T-cell (primary cell): ENCODE measurements at regions of chr6 and their contacts with region 1.

Region 1: DNA sequence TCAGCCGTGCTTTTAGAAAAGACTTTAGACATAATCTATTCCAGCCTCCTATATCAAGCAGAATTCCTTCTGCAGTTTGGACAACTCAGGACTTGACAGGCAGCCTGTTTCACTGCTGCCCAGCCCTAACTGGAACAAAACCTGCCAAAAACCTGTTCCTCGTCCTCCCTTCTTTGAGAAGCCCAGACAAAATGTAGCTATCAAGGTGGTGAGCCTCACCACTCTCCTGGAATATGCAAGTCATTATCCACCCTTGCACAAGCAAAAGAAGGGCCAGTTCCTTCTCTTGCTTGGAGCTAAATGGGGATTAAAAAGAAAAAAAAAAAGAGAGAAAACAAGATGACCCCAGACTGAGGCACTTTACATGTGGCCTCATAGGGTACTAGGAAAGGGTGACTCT is 64.2 kb downstream of the TFAP2A start:
- DNase-seq: no peak
- ATAC-seq: no peak
- H3K4me3 ChIP-seq: no peak overlapping the region
- H3K4me3 Mint-ChIP-seq: no peak overlapping the region
- H3K27ac ChIP-seq: no peak overlapping the region
- H3K27ac Mint-ChIP-seq: no peak overlapping the region
- H3K4me1 ChIP-seq: no peaks in the 10 kb centered on the region
- H3K4me1 Mint-ChIP-seq: no peaks in the 10 kb centered on the region
- H3K27me3 ChIP-seq: peaks cover 0 to 16% of the 10 kb centered on the region in 2 experiments
- H3K27me3 Mint-ChIP-seq: peaks cover 10 to 14% of the 10 kb centered on the region in 2 donors

Region 2: GRCh38 chr6:10269814-10270472 is 80.8 kb before region 1 on chr6:
- CTCF ChIA-PET with region 1: no interaction called
- POLR2A ChIA-PET with region 1: no interaction called
- DNase-seq: no peak
- ATAC-seq: no peak
- H3K4me3 ChIP-seq: no peak overlapping the region
- H3K4me3 Mint-ChIP-seq: no peak overlapping the region
- H3K27ac ChIP-seq: no peak overlapping the region
- H3K27ac Mint-ChIP-seq: no peak overlapping the region
- H3K4me1 ChIP-seq: no peaks in the 10 kb centered on the region
- H3K4me1 Mint-ChIP-seq: no peaks in the 10 kb centered on the region
- H3K27me3 ChIP-seq: peaks cover 7 to 9% of the 10 kb centered on the region in 2 experiments
- H3K27me3 Mint-ChIP-seq: peaks cover 13 to 20% of the 10 kb centered on the region in 2 donors

Region 3: GRCh38 chr6:10381133-10381829 is 30.6 kb after region 1 on chr6:
- CTCF ChIA-PET with region 1: interaction called in 1 of 2 experiments, 12 read pairs
- POLR2A ChIA-PET with region 1: no interaction called
- DNase-seq: no peak
- ATAC-seq: no peak
- H3K4me3 ChIP-seq: no peak overlapping the region
- H3K4me3 Mint-ChIP-seq: no peak overlapping the region
- H3K27ac ChIP-seq: no peak overlapping the region
- H3K27ac Mint-ChIP-seq: no peak overlapping the region
- H3K4me1 ChIP-seq: peaks cover 0 to 19% of the 10 kb centered on the region in 2 experiments
- H3K4me1 Mint-ChIP-seq: peaks cover 12 to 21% (median 16%) of the 10 kb centered on the region in 3 donors
- H3K27me3 ChIP-seq: peaks cover 29 to 67% of the 10 kb centered on the region in 2 experiments
- H3K27me3 Mint-ChIP-seq: peaks cover 65 to 76% of the 10 kb centered on the region in 2 donors